Activated naive CD4-positive, alpha-beta T cell treated with anti-CD3 and anti-CD28 coated beads, Interleukin-2, amount 10 ng/mL, durations not matched to agents 7 days and 5 days (primary cell): ENCODE measurements at regions of chr18 and their contacts with region 1.

Region 1: DNA sequence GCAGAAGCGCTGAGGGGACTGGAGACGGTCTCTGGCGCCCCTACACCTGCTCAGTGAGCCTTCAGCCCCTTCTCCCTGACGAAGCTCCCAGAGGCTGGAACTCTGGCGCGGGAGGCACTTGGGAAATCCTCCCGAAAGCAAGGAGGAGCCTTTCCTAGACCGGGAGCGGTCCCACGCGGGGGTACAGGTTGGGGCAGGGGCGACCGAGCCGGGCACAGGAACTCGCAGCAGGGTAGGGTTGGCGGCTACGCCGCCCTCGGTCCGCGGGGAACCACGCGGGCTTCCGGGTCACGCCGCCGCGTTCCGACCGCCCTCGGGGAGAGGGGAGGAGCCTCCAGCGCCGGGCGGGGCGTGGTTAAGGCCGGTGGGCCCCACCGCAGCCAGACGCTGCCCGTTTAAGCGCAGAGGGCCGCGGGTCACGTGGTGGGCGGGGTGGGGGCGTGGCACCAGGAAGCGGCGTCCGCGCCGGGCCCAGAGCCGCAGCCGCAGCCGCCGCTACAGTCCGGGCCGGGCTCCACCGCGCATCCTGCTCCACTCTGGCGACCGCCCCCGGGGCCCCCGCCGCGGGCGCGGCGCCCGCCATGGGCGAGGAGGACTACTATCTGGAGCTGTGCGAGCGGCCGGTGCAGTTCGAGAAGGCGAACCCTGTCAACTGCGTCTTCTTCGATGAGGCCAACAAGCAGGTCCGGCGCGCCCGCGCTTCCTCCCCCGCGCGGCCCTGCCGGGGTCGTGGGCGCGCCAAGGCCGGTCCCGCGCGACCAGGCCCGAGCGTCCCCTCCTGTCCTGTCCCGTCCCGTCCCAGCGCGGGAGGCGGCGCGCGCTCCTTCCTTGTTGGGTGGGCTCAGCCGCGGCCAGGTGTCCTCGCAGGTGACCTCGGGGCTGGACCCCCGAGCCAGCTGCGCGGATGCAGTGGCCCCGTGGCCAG is at the start of gene RMC1:
- DNase-seq: peak; percentile 97
- H3K4me3 Mint-ChIP-seq: peak within 1 kb of the TSS; percentile 86
- H3K27ac Mint-ChIP-seq: peak within 1 kb of the TSS; percentile 94
- H3K4me1 Mint-ChIP-seq: peaks cover 60% of the 10 kb centered on the region
- H3K27me3 Mint-ChIP-seq: no peaks in the 10 kb centered on the region

Region 2: GRCh38 chr18:23487738-23488570 is 15.3 kb before region 1 on chr18:
- CTCF ChIA-PET with region 1: interaction called, 32 read pairs
- DNase-seq: peak; percentile 70
- H3K4me3 Mint-ChIP-seq: peak overlapping the region; percentile 58
- H3K27ac Mint-ChIP-seq: peak overlapping the region; percentile 90
- H3K4me1 Mint-ChIP-seq: peaks cover 33% of the 10 kb centered on the region
- H3K27me3 Mint-ChIP-seq: peaks cover 4% of the 10 kb centered on the region

Region 3: DNA sequence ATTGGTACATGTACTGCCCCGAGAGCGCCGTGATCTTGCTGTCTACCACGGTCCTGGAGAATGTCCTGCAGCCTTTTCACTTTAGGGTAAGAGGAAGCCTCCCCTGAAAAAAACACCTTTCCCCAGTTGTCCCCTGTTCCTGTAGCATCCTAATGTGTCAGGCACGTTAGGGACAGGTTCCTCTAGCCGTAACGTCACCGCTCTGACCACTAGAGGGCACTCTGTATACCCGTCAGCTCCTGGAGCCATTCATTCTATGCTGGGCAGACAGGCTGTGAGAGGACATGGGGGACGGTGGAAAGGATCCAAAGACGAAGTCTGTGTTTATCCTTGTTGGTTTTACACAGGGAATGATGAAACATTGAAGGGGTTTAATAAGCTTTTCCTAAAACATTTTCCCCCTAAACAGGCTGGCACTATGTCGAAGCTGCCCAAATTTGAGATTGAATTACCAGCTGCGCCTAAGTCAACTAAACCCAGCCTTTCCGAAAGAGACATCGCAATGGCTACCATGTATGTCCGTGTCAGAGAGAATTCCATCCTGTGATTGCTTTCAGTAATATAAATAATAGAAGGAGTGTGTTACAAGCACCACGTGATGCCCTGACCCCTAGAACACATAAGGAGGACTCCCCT is 12.7 kb after region 1 on chr18:
- CTCF ChIA-PET with region 1: interaction called, 18 read pairs
- DNase-seq: peak; percentile 83
- H3K4me3 Mint-ChIP-seq: no peak overlapping the region
- H3K27ac Mint-ChIP-seq: peak overlapping the region; percentile 25
- H3K4me1 Mint-ChIP-seq: peaks cover 33% of the 10 kb centered on the region
- H3K27me3 Mint-ChIP-seq: no peaks in the 10 kb centered on the region

Region 4: GRCh38 chr18:23586249-23587196 is 83.2 kb after region 1 on chr18 and contains the start of gene NPC1:
- CTCF ChIA-PET with region 1: interaction called, 13 read pairs
- DNase-seq: peak; percentile 95
- H3K4me3 Mint-ChIP-seq: peak within 1 kb of the TSS; percentile 93
- H3K27ac Mint-ChIP-seq: peak within 1 kb of the TSS; percentile 97
- H3K4me1 Mint-ChIP-seq: peaks cover 42% of the 10 kb centered on the region
- H3K27me3 Mint-ChIP-seq: peaks cover 32% of the 10 kb centered on the region

Region 5: DNA sequence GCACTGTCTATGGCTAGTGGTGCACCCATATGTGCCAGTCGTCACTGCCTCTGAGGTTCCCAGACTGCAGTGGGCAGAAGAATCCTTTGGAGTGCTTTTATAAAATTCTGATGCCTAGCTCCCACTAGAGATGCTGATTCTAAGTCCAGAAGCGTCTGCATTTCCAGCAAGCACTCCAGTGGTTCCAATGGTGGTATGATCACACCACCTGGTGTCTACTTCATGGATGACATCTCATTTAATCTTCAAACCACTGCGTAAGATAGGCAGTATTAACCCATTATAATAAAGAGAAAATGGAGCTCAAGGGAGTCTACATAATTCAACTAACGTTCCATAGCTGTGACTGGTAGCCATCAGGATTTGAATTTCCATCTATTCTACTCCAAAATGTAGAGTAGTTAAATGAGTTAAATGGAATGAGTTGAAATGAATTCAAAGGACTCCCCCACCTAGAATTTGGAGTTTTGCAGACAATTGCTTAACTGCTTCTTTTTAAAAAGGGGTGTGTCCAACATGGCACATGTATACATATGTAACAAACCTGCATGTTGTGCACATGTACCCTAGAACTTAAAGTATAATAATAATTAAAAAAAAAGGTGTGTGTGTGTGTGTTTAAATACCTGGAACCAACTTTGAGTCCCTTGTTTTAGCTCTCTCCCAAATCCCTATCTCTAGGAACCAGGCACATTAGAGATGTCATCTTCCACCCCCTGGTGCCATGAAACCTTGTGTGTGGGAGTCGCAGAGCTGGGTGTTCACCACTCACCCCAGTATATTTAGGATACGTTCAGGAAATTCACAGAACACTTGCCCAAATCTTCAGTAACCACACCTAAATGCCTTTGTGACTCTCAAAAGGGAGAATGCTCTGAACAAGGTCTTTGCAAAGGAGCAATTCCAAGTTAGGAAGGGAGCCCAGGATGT is 200.0 kb after region 1 on chr18:
- CTCF ChIA-PET with region 1: interaction called, 24 read pairs
- DNase-seq: peak; percentile 44
- H3K4me3 Mint-ChIP-seq: no peak overlapping the region
- H3K27ac Mint-ChIP-seq: no peak overlapping the region
- H3K4me1 Mint-ChIP-seq: no peaks in the 10 kb centered on the region
- H3K27me3 Mint-ChIP-seq: peaks cover 42% of the 10 kb centered on the region

Region 6: DNA sequence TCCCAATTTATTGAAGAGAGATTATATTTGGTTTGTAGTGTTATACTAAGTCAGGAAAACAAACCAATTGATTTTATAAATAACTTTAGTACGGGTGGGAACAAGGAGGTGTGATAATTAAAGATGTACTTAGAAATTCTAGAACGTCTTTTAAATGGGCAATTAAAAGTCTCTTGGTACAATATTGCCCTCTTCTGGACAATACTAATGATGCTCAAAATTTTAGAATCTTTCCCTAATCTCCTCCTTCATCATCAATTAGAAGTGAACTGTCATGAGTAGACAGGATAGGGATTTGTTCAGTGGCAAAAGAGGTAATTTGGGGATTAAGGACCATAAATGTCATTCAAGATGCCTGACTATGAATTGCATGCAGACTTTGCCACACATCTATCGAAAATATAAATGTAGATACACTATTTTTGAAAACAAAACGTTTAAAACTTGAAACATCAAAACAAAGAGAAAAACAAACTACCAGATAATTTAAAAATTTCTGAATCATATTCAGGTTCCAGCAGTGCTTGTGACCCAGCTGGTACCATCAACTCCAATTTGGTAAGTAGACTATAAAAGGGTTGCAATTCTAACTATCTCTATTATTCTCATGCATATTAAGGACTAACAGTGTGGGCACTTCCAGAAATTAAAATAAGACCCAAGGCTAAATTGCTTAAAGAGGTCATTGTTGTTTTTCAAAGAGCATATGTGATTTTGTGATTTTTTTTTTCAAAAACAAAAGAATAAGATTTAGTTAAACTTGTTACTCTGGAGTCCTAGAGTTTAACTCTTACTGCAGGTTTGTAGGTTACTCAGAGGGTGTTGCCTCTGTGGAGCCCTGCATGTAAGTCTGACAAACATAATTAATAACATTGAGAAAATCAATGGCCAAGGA is 309.5 kb after region 1 on chr18:
- CTCF ChIA-PET with region 1: interaction called, 10 read pairs
- DNase-seq: no peak
- H3K4me3 Mint-ChIP-seq: no peak overlapping the region
- H3K27ac Mint-ChIP-seq: no peak overlapping the region
- H3K4me1 Mint-ChIP-seq: peaks cover 26% of the 10 kb centered on the region
- H3K27me3 Mint-ChIP-seq: peaks cover 45% of the 10 kb centered on the region